Activated naive CD4-positive, alpha-beta T cell treated with anti-CD3 and anti-CD28 coated beads for 36 hours (primary cell): ENCODE measurements at regions of chr12 and their contacts with region 1.

Region 1: GRCh38 chr12:111396726-111397445 is 8.8 kb upstream of the SH2B3 start:
- DNase-seq: peak; percentile 88
- H3K4me3 Mint-ChIP-seq: peak overlapping the region; percentile 65
- H3K27ac Mint-ChIP-seq: no peak overlapping the region
- H3K4me1 Mint-ChIP-seq: peaks cover 36% of the 10 kb centered on the region
- H3K27me3 Mint-ChIP-seq: no peaks in the 10 kb centered on the region

Region 2: DNA sequence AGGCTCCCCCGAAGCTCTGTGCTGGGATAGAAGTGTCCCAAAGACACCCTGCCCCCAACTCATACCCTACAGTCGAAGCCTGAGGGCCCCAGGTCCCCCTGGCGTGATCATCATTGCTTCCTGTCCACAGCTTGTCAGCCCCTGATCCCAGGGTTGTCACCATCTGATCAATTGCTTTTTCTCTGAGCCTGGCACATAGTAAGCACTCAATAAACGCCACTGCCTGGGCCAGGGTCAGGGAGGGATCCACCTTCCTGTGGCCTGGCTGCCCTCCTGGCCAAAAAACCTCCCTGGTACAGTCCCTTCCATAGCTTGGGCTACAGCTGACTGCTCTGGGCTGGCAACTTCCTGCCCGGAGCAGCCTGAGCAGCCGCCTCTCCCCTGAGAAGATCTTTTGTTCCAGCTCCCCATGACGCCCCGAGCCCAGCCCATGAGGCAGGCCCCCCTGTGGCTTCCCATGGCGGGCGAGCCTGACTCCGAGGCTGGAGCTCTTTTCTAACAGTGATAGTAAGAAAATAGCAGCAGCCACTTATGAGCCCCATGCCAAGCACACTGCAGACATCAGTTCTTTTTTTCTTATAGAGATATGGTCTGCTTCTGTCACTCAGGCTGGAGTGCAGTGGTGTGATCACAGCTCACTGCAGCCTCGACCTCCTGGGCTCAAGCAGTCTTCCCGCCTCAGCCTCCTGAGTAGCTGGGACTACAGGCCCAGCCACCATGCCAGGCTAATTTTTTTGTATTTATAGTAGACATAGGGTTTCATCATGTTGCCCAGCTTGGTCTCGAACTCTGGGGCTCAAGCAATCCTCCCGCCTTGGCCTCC is 15.3 kb after region 1 on chr12:
- CTCF ChIA-PET with region 1: interaction called, 29 read pairs
- intact Hi-C with region 1: no loop called
- DNase-seq: no peak
- H3K4me3 Mint-ChIP-seq: no peak overlapping the region
- H3K27ac Mint-ChIP-seq: peak overlapping the region; percentile 67
- H3K4me1 Mint-ChIP-seq: peaks cover 83% of the 10 kb centered on the region
- H3K27me3 Mint-ChIP-seq: no peaks in the 10 kb centered on the region

Region 3: GRCh38 chr12:111451649-111452129 is 54.8 kb after region 1 on chr12:
- CTCF ChIA-PET with region 1: interaction called, 763 read pairs
- intact Hi-C with region 1: loop called (anchors 1 kb)
- DNase-seq: no peak
- H3K4me3 Mint-ChIP-seq: no peak overlapping the region
- H3K27ac Mint-ChIP-seq: peak overlapping the region; percentile 19
- H3K4me1 Mint-ChIP-seq: peaks cover 23% of the 10 kb centered on the region
- H3K27me3 Mint-ChIP-seq: no peaks in the 10 kb centered on the region

Region 4: GRCh38 chr12:111482462-111482861 is 85.6 kb after region 1 on chr12:
- CTCF ChIA-PET with region 1: interaction called, 22 read pairs
- intact Hi-C with region 1: loop called (anchors 1 kb)
- DNase-seq: no peak
- H3K4me3 Mint-ChIP-seq: no peak overlapping the region
- H3K27ac Mint-ChIP-seq: no peak overlapping the region
- H3K4me1 Mint-ChIP-seq: no peaks in the 10 kb centered on the region
- H3K27me3 Mint-ChIP-seq: no peaks in the 10 kb centered on the region

Region 5: GRCh38 chr12:111685744-111686517 is 289.0 kb after region 1 on chr12 and contains the starts of genes ACAD10 and BRAP:
- CTCF ChIA-PET with region 1: no interaction called
- intact Hi-C with region 1: loop called (anchors 2 kb)
- DNase-seq: peak; percentile 94
- H3K4me3 Mint-ChIP-seq: peak within 1 kb of the TSS; percentile 91
- H3K27ac Mint-ChIP-seq: peak within 1 kb of the TSS; percentile 86
- H3K4me1 Mint-ChIP-seq: peaks cover 33% of the 10 kb centered on the region
- H3K27me3 Mint-ChIP-seq: no peaks in the 10 kb centered on the region
- total RNA-seq, gene ACAD10: 19.0 to 21.7 TPM
- total RNA-seq, gene BRAP: 14.7 to 16.9 TPM